ENCODE measurements at regions of chr19 and their contacts with region 1.

Region 1: DNA sequence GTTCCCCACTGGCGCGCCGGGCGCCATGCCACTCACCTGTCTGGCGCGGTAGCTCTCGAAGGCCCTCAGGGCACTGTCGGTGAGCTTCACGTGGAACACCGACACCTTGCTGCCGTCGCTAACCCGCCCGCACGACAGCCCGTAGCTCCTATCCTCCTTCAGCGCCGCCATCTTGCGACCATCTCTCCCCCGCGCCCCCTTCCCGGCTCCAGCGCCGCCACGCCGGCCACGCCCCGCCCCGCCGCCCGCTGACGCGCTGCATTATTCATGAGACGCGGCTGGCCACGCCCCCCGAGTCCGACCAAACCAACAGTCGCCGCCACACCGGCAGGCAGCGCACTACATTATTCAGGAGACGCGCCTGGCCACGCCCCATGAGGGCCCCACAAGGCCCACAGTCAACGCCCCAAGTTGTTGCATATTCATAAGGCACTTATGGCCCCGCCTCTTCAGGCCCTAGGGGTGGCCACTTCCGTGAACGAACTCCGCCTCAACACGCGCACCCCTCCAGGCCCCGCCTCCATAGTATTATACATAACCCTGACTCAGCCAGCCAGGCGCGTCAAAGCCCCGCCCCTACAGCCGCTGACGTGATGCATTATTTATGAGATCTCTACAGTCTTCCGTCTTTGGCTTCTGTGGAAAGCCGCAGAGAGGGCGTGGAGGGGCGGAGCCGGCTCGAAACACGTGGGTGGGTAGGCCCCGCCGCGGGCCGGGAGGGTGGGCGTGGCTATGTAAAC is at the start of gene ELL:
- DNase-seq: peak; percentile 100
- ATAC-seq: peak; percentile 87
- H3K4me3 ChIP-seq: peak within 1 kb of the TSS; percentile 74 to 97 (median 89)
- H3K4me3 Mint-ChIP-seq: peak within 1 kb of the TSS; percentile 90
- H3K27ac ChIP-seq: peak within 1 kb of the TSS; percentile 95 to 98
- H3K27ac Mint-ChIP-seq: peak within 1 kb of the TSS; percentile 95
- H3K4me1 ChIP-seq: peaks cover 7 to 23% of the 10 kb centered on the region in 2 donors
- H3K4me1 Mint-ChIP-seq: peaks cover 18% of the 10 kb centered on the region
- H3K27me3 ChIP-seq: no peaks in the 10 kb centered on the region
- H3K27me3 Mint-ChIP-seq: no peaks in the 10 kb centered on the region
- CTCF ChIP-seq: no peak
- total RNA-seq, gene ELL: 31.4 and 34.0 TPM in 2 replicates

Region 2: GRCh38 chr19:17226002-17226933 is 1295.8 kb before region 1 on chr19 and contains the start of gene OCEL1:
- CTCF ChIA-PET with region 1: no interaction called
- POLR2A ChIA-PET with region 1: no interaction called
- intact Hi-C with region 1: loop called (anchors 5 kb)
- DNase-seq: peak; percentile 99
- ATAC-seq: peak; percentile 90
- H3K4me3 ChIP-seq: peak within 1 kb of the TSS; percentile 74 to 81 (median 79)
- H3K4me3 Mint-ChIP-seq: peak within 1 kb of the TSS; percentile 90
- H3K27ac ChIP-seq: peak within 1 kb of the TSS; percentile 75 to 80
- H3K27ac Mint-ChIP-seq: peak within 1 kb of the TSS; percentile 94
- H3K4me1 ChIP-seq: peaks cover 3 to 20% of the 10 kb centered on the region in 2 donors
- H3K4me1 Mint-ChIP-seq: peaks cover 12% of the 10 kb centered on the region
- H3K27me3 ChIP-seq: no peaks in the 10 kb centered on the region
- H3K27me3 Mint-ChIP-seq: no peaks in the 10 kb centered on the region
- CTCF ChIP-seq: no peak
- total RNA-seq, gene OCEL1: 30.5 and 40.4 TPM in 2 replicates

Region 3: DNA sequence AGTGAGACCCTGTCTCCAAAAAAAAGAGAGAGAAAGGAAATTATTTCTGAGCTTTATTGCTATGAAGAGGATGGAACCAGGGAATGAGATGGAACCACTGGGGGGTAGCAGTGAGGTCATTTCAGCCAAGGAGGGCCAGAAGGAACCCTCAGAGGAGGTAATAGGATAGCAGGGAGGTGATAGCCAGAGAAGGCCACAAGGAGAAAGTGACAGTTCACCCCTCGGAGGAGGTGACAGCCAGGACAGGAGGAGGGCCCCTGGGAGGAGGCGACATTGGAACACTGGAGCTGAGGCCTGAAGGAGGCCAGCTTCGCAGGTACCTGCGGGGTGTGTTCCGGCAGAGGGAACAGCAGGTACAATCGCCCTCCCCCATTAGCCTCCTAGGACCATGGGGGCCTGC is 182.3 kb before region 1 on chr19:
- CTCF ChIA-PET with region 1: no interaction called
- POLR2A ChIA-PET with region 1: no interaction called
- intact Hi-C with region 1: no loop called
- DNase-seq: no peak
- ATAC-seq: no peak
- H3K4me3 ChIP-seq: peak overlapping the region in 4 of 5 experiments; percentile 71 to 88 (median 84)
- H3K4me3 Mint-ChIP-seq: peak overlapping the region; percentile 79
- H3K27ac ChIP-seq: no peak overlapping the region
- H3K27ac Mint-ChIP-seq: peak overlapping the region; percentile 37
- H3K4me1 ChIP-seq: peaks cover 13 to 18% of the 10 kb centered on the region in 2 donors
- H3K4me1 Mint-ChIP-seq: peaks cover 13% of the 10 kb centered on the region
- H3K27me3 ChIP-seq: no peaks in the 10 kb centered on the region
- H3K27me3 Mint-ChIP-seq: peaks cover 3% of the 10 kb centered on the region
- CTCF ChIP-seq: no peak

Region 4: GRCh38 chr19:18428787-18429674 is 93.0 kb before region 1 on chr19:
- CTCF ChIA-PET with region 1: no interaction called
- POLR2A ChIA-PET with region 1: no interaction called
- intact Hi-C with region 1: no loop called
- DNase-seq: peak; percentile 96
- ATAC-seq: peak; percentile 81
- H3K4me3 ChIP-seq: peak overlapping the region in 4 of 5 experiments; percentile 54 to 61 (median 58)
- H3K4me3 Mint-ChIP-seq: peak overlapping the region; percentile 78
- H3K27ac ChIP-seq: peak overlapping the region; percentile 85 to 89
- H3K27ac Mint-ChIP-seq: peak overlapping the region; percentile 86
- H3K4me1 ChIP-seq: peaks cover 24 to 39% of the 10 kb centered on the region in 2 donors
- H3K4me1 Mint-ChIP-seq: peaks cover 21% of the 10 kb centered on the region
- H3K27me3 ChIP-seq: no peaks in the 10 kb centered on the region
- H3K27me3 Mint-ChIP-seq: no peaks in the 10 kb centered on the region
- CTCF ChIP-seq: no peak

Region 5: GRCh38 chr19:18542936-18543815 is 21.1 kb after region 1 on chr19 and contains the start of gene FKBP8:
- CTCF ChIA-PET with region 1: no interaction called
- POLR2A ChIA-PET with region 1: interaction called, 16 read pairs
- intact Hi-C with region 1: loop called (anchors 1 kb)
- DNase-seq: peak; percentile 92
- ATAC-seq: peak; percentile 98
- H3K4me3 ChIP-seq: peak within 1 kb of the TSS; percentile 51 to 76 (median 68)
- H3K4me3 Mint-ChIP-seq: peak within 1 kb of the TSS; percentile 96
- H3K27ac ChIP-seq: peak within 1 kb of the TSS; percentile 54 to 64
- H3K27ac Mint-ChIP-seq: peak within 1 kb of the TSS; percentile 96
- H3K4me1 ChIP-seq: peaks cover 14 to 20% of the 10 kb centered on the region in 2 donors
- H3K4me1 Mint-ChIP-seq: peaks cover 20% of the 10 kb centered on the region
- H3K27me3 ChIP-seq: no peaks in the 10 kb centered on the region
- H3K27me3 Mint-ChIP-seq: no peaks in the 10 kb centered on the region
- CTCF ChIP-seq: no peak
- total RNA-seq, gene FKBP8: 148 and 150 TPM in 2 replicates

Region 6: GRCh38 chr19:18588611-18589379 is 66.7 kb after region 1 on chr19 and contains the start of gene REX1BD:
- CTCF ChIA-PET with region 1: interaction called, 32 read pairs
- POLR2A ChIA-PET with region 1: interaction called, 19 read pairs
- intact Hi-C with region 1: loop called (anchors 1 kb)
- DNase-seq: peak; percentile 93
- ATAC-seq: peak; percentile 78
- H3K4me3 ChIP-seq: peak within 1 kb of the TSS; percentile 46 to 92 (median 77)
- H3K4me3 Mint-ChIP-seq: peak within 1 kb of the TSS; percentile 76
- H3K27ac ChIP-seq: peak within 1 kb of the TSS; percentile 73 to 82
- H3K27ac Mint-ChIP-seq: peak within 1 kb of the TSS; percentile 89
- H3K4me1 ChIP-seq: peaks cover 18 to 43% of the 10 kb centered on the region in 2 donors
- H3K4me1 Mint-ChIP-seq: peaks cover 30% of the 10 kb centered on the region
- H3K27me3 ChIP-seq: no peaks in the 10 kb centered on the region
- H3K27me3 Mint-ChIP-seq: no peaks in the 10 kb centered on the region
- CTCF ChIP-seq: peak; percentile 80
- total RNA-seq, gene REX1BD: 78.1 and 90.9 TPM in 2 replicates

Region 7: DNA sequence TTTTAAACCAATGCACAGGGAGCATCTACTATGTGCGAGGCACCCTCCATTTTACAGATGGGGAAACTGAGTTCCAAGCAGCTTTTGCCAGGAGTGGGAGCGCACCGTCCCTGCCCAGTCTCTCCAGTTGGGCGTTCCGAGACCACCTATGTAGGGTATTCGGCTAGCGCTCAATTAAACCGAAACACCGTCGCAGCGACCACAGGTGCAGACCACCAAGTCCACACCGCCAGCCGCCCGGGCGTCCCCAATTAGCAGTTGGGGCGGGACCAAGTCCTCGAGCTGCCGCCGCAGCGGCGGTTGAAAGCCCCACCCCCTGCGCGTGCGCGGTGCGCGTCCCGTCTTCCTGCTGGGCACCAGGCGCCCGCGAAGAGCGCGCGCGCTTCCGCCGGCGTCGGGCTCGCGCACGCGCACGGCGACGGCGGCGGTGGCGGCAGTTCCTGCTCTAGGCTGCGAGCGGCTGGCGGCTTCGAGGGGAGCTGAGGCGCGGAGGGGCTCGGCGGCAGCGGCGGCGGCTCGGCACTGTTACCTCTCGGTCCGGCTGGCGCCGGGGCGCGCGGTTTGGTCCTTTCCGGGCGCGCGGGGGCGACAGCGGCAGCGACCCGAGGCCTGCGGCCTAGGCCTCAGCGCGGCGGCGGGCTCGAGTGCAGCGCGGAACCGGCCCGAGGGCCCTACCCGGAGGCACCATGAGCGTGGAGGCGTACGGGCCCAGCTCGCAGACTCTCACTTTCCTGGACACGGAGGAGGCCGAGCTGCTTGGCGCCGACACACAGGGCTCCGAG is 309.7 kb after region 1 on chr19 and contains the start of gene UPF1:
- CTCF ChIA-PET with region 1: interaction called, 3 read pairs
- POLR2A ChIA-PET with region 1: no interaction called
- intact Hi-C with region 1: loop called (anchors 1 kb)
- DNase-seq: peak; percentile 97
- ATAC-seq: peak; percentile 81
- H3K4me3 ChIP-seq: peak within 1 kb of the TSS; percentile 63 to 82 (median 73)
- H3K4me3 Mint-ChIP-seq: peak within 1 kb of the TSS; percentile 91
- H3K27ac ChIP-seq: peak within 1 kb of the TSS; percentile 60 to 90
- H3K27ac Mint-ChIP-seq: peak within 1 kb of the TSS; percentile 92
- H3K4me1 ChIP-seq: peaks cover 34 to 39% of the 10 kb centered on the region in 2 donors
- H3K4me1 Mint-ChIP-seq: peaks cover 36% of the 10 kb centered on the region
- H3K27me3 ChIP-seq: no peaks in the 10 kb centered on the region
- H3K27me3 Mint-ChIP-seq: peaks cover 8% of the 10 kb centered on the region
- CTCF ChIP-seq: no peak
- total RNA-seq, gene UPF1: 95.1 and 98.6 TPM in 2 replicates

Region 8: GRCh38 chr19:19033426-19034203 is 511.6 kb after region 1 on chr19 and contains the starts of genes ARMC6 and SUGP2:
- CTCF ChIA-PET with region 1: no interaction called
- POLR2A ChIA-PET with region 1: no interaction called
- intact Hi-C with region 1: loop called (anchors 5 kb)
- DNase-seq: peak; percentile 98
- ATAC-seq: peak; percentile 82
- H3K4me3 ChIP-seq: peak within 1 kb of the TSS; percentile 68 to 84 (median 74)
- H3K4me3 Mint-ChIP-seq: peak within 1 kb of the TSS; percentile 96
- H3K27ac ChIP-seq: peak within 1 kb of the TSS; percentile 65 to 76
- H3K27ac Mint-ChIP-seq: peak within 1 kb of the TSS; percentile 93
- H3K4me1 ChIP-seq: peaks cover 18 to 24% of the 10 kb centered on the region in 2 donors
- H3K4me1 Mint-ChIP-seq: peaks cover 26% of the 10 kb centered on the region
- H3K27me3 ChIP-seq: no peaks in the 10 kb centered on the region
- H3K27me3 Mint-ChIP-seq: no peaks in the 10 kb centered on the region
- CTCF ChIP-seq: no peak
- total RNA-seq, gene ARMC6: 15.2 TPM in 2 replicates
- total RNA-seq, gene SUGP2: 154 and 164 TPM in 2 replicates